CD14-positive monocyte (primary cell): ENCODE measurements at regions of chr16 and their contacts with region 1.

Region 1: DNA sequence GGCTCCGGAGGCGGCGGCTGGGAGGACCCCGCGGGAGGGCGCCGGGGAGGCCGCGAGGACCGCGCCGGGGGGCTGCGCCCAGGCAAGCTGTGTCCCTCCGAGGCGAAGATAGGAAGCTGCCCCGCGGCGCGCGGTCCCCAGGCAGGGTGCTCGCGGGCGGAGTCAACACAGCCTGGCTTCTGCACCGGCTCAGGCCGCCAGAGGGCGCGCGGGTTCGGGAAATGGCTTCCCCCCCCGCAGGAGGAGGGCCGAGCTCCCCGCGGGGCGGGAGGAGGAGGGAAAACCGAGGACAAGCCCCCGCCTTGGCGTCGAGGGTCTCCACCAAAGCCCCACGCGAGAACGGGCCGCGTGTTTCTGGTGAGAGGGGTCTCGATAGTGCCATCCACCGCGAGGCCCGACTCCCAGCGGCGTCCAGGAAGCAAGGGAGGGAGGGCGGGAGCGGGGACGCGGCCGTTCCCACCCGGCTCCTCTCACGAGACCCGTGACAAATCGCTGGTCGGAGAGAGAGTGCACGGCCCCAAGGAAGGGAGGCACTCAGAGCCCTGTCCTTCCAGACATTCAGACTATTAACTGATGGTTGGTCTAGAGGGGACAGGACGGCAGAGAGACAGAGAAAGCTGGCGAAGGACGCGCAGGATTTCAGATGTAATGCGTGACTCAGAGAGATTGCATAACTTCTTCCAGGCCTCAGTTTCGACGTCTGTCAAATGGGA is 64.4 kb upstream of the DNAJA2 start:
- DNase-seq: peak; percentile 82 to 87 (median 86)
- H3K4me3 ChIP-seq: peak overlapping the region; percentile 47 to 81 (median 79)
- H3K4me3 Mint-ChIP-seq: peak overlapping the region; percentile 82 to 93
- H3K27ac ChIP-seq: peak overlapping the region; percentile 48 to 88
- H3K27ac Mint-ChIP-seq: peak overlapping the region; percentile 81 to 93 (median 87)
- H3K4me1 ChIP-seq: peaks cover 6 to 7% of the 10 kb centered on the region in 2 donors
- H3K4me1 Mint-ChIP-seq: peaks cover 9% of the 10 kb centered on the region
- H3K27me3 ChIP-seq: peaks cover 0 to 2% of the 10 kb centered on the region in 2 donors
- H3K27me3 Mint-ChIP-seq: peaks cover 3 to 6% (median 6%) of the 10 kb centered on the region in 3 donors
- CTCF ChIP-seq: peak; percentile 97

Region 2: DNA sequence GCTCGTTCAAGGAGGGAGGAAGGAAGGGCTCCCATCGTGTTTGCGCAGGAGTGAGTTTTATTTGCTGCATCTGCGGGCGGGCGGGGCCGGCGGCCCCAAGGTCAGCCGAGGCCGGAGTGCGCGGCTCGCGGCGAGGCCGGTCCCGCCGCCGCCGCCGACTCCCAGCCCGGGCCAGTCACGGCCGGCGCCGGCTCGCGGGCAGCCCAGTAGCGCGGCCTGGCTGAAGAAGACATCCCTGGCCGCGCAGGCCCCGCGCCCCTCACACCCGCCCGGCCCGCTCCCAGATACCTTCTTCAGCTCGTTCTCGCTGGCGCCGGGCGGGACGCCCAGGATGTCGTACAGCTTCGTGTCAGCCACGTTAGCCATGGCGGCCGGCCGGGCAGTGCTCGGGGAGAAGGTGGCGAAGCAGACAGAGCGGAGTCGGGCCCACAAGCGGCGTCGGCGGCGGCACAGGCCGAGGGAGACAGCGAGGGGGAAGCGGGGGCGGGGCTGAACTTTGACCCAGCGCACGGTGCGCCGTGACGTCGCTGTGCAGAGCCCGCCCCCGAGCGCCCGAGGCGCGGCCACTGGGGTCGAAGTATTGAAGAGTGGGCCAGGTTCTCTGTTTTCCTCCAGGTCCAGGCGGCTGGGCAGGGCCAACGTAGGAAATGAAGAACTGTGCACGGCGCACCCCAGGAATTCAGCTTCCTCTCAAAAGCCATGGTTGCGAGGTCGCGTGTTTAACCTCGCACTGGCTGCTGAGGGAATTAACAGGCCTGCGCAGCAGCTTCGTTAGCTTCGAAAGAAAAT is 64.5 kb before region 1 on chr16 and contains the start of gene DNAJA2:
- intact Hi-C with region 1: loop called (anchors 5 to 10 kb)
- DNase-seq: peak; percentile 91 to 95 (median 93)
- H3K4me3 ChIP-seq: peak within 1 kb of the TSS; percentile 76 to 94 (median 77)
- H3K4me3 Mint-ChIP-seq: peak within 1 kb of the TSS; percentile 92 to 93
- H3K27ac ChIP-seq: peak within 1 kb of the TSS; percentile 92 to 94
- H3K27ac Mint-ChIP-seq: peak within 1 kb of the TSS; percentile 95 to 99 (median 98)
- H3K4me1 ChIP-seq: peaks cover 18 to 25% of the 10 kb centered on the region in 2 donors
- H3K4me1 Mint-ChIP-seq: peaks cover 25% of the 10 kb centered on the region
- H3K27me3 ChIP-seq: no peaks in the 10 kb centered on the region
- H3K27me3 Mint-ChIP-seq: peaks cover 0 to 2% (median 0%) of the 10 kb centered on the region in 3 donors
- CTCF ChIP-seq: no peak
- polyA plus RNA-seq, gene DNAJA2: 14.4 to 63.4 (median 62.9) TPM

Region 3: GRCh38 chr16:47213761-47214440 is 176.0 kb after region 1 on chr16:
- intact Hi-C with region 1: no loop called
- DNase-seq: no peak
- H3K4me3 ChIP-seq: no peak overlapping the region
- H3K4me3 Mint-ChIP-seq: no peak overlapping the region
- H3K27ac ChIP-seq: no peak overlapping the region
- H3K27ac Mint-ChIP-seq: no peak overlapping the region
- H3K4me1 ChIP-seq: no peaks in the 10 kb centered on the region
- H3K4me1 Mint-ChIP-seq: no peaks in the 10 kb centered on the region
- H3K27me3 ChIP-seq: no peaks in the 10 kb centered on the region
- H3K27me3 Mint-ChIP-seq: no peaks in the 10 kb centered on the region
- CTCF ChIP-seq: no peak

Region 4: GRCh38 chr16:48156790-48157209 is 1118.9 kb after region 1 on chr16:
- intact Hi-C with region 1: loop called in 1 of 2 experiments (anchors 5 kb)
- DNase-seq: peak; percentile 68 to 77 (median 72)
- H3K4me3 ChIP-seq: no peak overlapping the region
- H3K4me3 Mint-ChIP-seq: no peak overlapping the region
- H3K27ac ChIP-seq: no peak overlapping the region
- H3K27ac Mint-ChIP-seq: peak overlapping the region in 1 of 7 donors; percentile 4
- H3K4me1 ChIP-seq: peaks cover 0 to 3% of the 10 kb centered on the region in 2 donors
- H3K4me1 Mint-ChIP-seq: peaks cover 7% of the 10 kb centered on the region
- H3K27me3 ChIP-seq: peaks cover 0 to 2% of the 10 kb centered on the region in 2 donors
- H3K27me3 Mint-ChIP-seq: peaks cover 8 to 22% (median 10%) of the 10 kb centered on the region in 3 donors
- CTCF ChIP-seq: peak; percentile 96

Region 5: GRCh38 chr16:48164907-48165726 is 1127.2 kb after region 1 on chr16:
- intact Hi-C with region 1: loop called in 1 of 2 experiments (anchors 5 kb)
- DNase-seq: peak; percentile 68 to 78 (median 72)
- H3K4me3 ChIP-seq: no peak overlapping the region
- H3K4me3 Mint-ChIP-seq: peak overlapping the region in 1 of 2 donors; percentile 1
- H3K27ac ChIP-seq: no peak overlapping the region
- H3K27ac Mint-ChIP-seq: peak overlapping the region in 6 of 7 donors; percentile 1 to 85 (median 73)
- H3K4me1 ChIP-seq: peaks cover 24 to 27% of the 10 kb centered on the region in 2 donors
- H3K4me1 Mint-ChIP-seq: peaks cover 33% of the 10 kb centered on the region
- H3K27me3 ChIP-seq: no peaks in the 10 kb centered on the region
- H3K27me3 Mint-ChIP-seq: peaks cover 2 to 10% (median 2%) of the 10 kb centered on the region in 3 donors
- CTCF ChIP-seq: peak; percentile 91